K562 (cell line): ENCODE measurements at regions of chr1 and their contacts with region 1.

Region 1: GRCh38 chr1:19251305-19252196 is at the starts of genes EMC1 and MRTO4:
- DNase-seq: peak; percentile 94 to 95 (median 94)
- ATAC-seq: peak; percentile 93
- H3K4me3 ChIP-seq: peak within 1 kb of the TSS; percentile 99
- H3K27ac ChIP-seq: peak within 1 kb of the TSS; percentile 99
- H3K4me1 ChIP-seq: peaks cover 14 to 21% of the 10 kb centered on the region in 2 experiments; a peak in 4 of 5 replicates
- H3K27me3 ChIP-seq: no peaks in the 10 kb centered on the region
- CTCF ChIP-seq: no peak
- EP300 ChIP-seq: no peak; the same call in 1 of the 2 replicates
- POLR2A ChIP-seq: peak; percentile 97
- RAD21 ChIP-seq: no peak
- polyA plus RNA-seq, gene EMC1: 32.1 to 69.3 TPM
- polyA plus RNA-seq, gene MRTO4: 62.0 to 146 TPM

Region 2: GRCh38 chr1:19341201-19342072 is 89.9 kb after region 1 on chr1:
- CTCF ChIA-PET with region 1: no interaction called
- POLR2A ChIA-PET with region 1: no interaction called
- in situ Hi-C with region 1: no loop called
- intact Hi-C with region 1: loop called (anchors 5 kb)
- DNase-seq: peak; percentile 90 to 92 (median 91)
- ATAC-seq: peak; percentile 88
- H3K4me3 ChIP-seq: no peak overlapping the region
- H3K27ac ChIP-seq: peak overlapping the region; percentile 6; the same call in 1 of the 3 replicates
- H3K4me1 ChIP-seq: peaks cover 4 to 52% of the 10 kb centered on the region in 2 experiments; a peak in 4 of 5 replicates
- H3K27me3 ChIP-seq: no peaks in the 10 kb centered on the region
- CTCF ChIP-seq: peak; percentile 91 to 99 (median 96)
- EP300 ChIP-seq: no peak
- POLR2A ChIP-seq: no peak
- RAD21 ChIP-seq: peak; percentile 42 to 72